Naive thymus-derived CD4-positive, alpha-beta T cell (primary cell): ENCODE measurements at regions of chrX and their contacts with region 1.

Region 1: GRCh38 chrX:154458114-154458953 is at the start of gene PLXNA3:
- DNase-seq: peak; percentile 40 to 74 (median 68)
- ATAC-seq: peak; percentile 90
- H3K4me3 ChIP-seq: peak within 1 kb of the TSS; percentile 45
- H3K4me3 Mint-ChIP-seq: peak within 1 kb of the TSS; percentile 79 to 97 (median 94)
- H3K27ac ChIP-seq: peak within 1 kb of the TSS; percentile 70
- H3K27ac Mint-ChIP-seq: peak within 1 kb of the TSS; percentile 86 to 98 (median 94)
- H3K4me1 ChIP-seq: peaks cover 0 to 3% of the 10 kb centered on the region in 2 donors
- H3K4me1 Mint-ChIP-seq: peaks cover 4 to 16% (median 9%) of the 10 kb centered on the region in 7 donors
- H3K27me3 ChIP-seq: no peaks in the 10 kb centered on the region
- H3K27me3 Mint-ChIP-seq: no peaks in the 10 kb centered on the region
- total RNA-seq, gene PLXNA3: 32.9 to 45.7 (median 43.3) TPM

Region 2: DNA sequence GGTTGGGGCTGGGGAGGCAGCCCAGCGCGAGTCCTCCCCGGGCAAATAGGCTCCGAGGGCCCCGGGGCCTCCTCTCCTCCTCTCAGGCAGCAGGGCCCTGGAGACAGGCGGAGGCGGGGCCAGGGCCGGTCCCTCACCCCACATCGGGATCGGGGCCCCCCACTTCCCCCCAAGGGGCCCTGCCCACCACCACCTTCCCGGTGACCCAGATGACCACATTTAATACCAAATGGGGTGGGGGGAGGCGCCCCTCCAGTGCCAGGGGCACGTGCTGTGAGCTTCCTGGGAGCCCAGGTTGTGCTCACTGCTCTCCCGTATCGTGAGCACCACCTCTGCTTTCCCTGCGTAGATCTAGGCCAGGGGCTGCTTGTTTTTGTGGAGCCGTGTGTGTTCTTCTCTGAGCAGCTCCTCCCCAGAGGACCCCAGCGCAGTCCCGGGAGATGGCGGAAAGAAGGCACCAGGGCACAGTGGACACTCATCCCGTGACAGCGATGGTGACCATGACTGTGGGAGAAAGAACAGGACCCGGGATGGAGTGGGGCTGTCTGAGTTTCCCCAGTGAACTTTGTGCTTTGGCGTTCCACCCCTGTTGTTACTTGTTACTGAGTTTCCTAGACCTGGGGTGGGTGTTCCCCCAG is 1384.0 kb before region 1 on chrX:
- CTCF ChIA-PET with region 1: no interaction called
- POLR2A ChIA-PET with region 1: no interaction called
- intact Hi-C with region 1: no loop called
- DNase-seq: no peak
- ATAC-seq: no peak
- H3K4me3 ChIP-seq: no peak overlapping the region
- H3K4me3 Mint-ChIP-seq: peak overlapping the region in 2 of 10 donors; percentile 44 to 57
- H3K27ac ChIP-seq: no peak overlapping the region
- H3K27ac Mint-ChIP-seq: no peak overlapping the region
- H3K4me1 ChIP-seq: no peaks in the 10 kb centered on the region
- H3K4me1 Mint-ChIP-seq: no peaks in the 10 kb centered on the region
- H3K27me3 ChIP-seq: no peaks in the 10 kb centered on the region
- H3K27me3 Mint-ChIP-seq: peaks cover 0 to 4% (median 0%) of the 10 kb centered on the region in 5 donors

Region 3: DNA sequence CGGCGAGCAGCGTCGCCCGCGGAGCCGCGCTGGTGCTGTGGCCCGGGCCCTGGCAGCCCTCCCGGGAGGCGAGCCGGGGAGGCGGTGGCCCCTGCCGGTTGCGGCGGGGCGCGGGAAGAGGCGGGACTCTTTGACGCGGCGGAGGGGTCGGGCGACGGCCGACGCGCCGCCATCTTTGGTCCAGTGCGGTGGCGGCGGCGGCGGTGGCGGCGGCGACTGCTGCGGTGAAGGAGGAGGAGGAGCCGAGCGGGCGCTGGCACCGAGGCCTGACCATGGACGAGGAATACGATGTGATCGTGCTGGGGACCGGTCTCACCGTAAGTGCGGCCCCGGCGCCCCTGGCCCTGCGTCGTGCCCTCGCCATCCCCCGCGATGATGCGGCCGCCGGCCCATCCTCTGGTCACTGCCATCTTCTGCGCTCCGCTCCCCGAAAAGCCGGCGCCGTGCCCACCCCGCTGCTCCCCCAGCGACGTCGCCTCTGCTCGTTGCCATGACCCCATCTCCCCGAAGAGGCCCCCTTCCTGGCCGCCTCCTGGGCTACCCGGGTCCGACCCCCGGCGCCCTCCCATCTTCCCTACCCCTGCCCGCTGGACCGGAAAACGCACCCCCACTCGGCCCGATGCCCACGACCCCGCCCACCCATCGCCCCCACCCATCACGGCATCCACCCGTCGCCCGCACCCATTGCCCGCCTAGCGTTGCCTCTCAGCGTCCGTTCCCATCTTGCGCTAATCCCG is 21.2 kb before region 1 on chrX and contains the start of gene GDI1:
- CTCF ChIA-PET with region 1: no interaction called
- POLR2A ChIA-PET with region 1: interaction called, 6 read pairs
- intact Hi-C with region 1: loop called in 1 of 2 experiments (anchors 2 kb)
- DNase-seq: peak; percentile 39 to 72 (median 62)
- ATAC-seq: peak; percentile 82
- H3K4me3 ChIP-seq: peak within 1 kb of the TSS; percentile 48
- H3K4me3 Mint-ChIP-seq: peak within 1 kb of the TSS; percentile 75 to 90 (median 86)
- H3K27ac ChIP-seq: peak within 1 kb of the TSS; percentile 85
- H3K27ac Mint-ChIP-seq: peak within 1 kb of the TSS; percentile 82 to 97 (median 91)
- H3K4me1 ChIP-seq: no peaks in the 10 kb centered on the region
- H3K4me1 Mint-ChIP-seq: peaks cover 0 to 36% (median 17%) of the 10 kb centered on the region in 7 donors
- H3K27me3 ChIP-seq: no peaks in the 10 kb centered on the region
- H3K27me3 Mint-ChIP-seq: no peaks in the 10 kb centered on the region
- total RNA-seq, gene GDI1: 106 to 174 (median 140) TPM

Region 4: GRCh38 chrX:154443992-154444754 is 14.2 kb before region 1 on chrX and contains the start of gene FAM50A:
- CTCF ChIA-PET with region 1: no interaction called
- POLR2A ChIA-PET with region 1: interaction called, 6 read pairs
- intact Hi-C with region 1: loop called (anchors 1 to 2 kb)
- DNase-seq: peak; percentile 38 to 81 (median 53)
- ATAC-seq: peak; percentile 91
- H3K4me3 ChIP-seq: peak within 1 kb of the TSS; percentile 55
- H3K4me3 Mint-ChIP-seq: peak within 1 kb of the TSS; percentile 53 to 84 (median 78)
- H3K27ac ChIP-seq: peak within 1 kb of the TSS; percentile 74
- H3K27ac Mint-ChIP-seq: peak within 1 kb of the TSS in 6 of 9 donors; percentile 71 to 88 (median 78)
- H3K4me1 ChIP-seq: peaks cover 6 to 14% of the 10 kb centered on the region in 2 donors
- H3K4me1 Mint-ChIP-seq: peaks cover 0 to 29% (median 10%) of the 10 kb centered on the region in 7 donors
- H3K27me3 ChIP-seq: no peaks in the 10 kb centered on the region
- H3K27me3 Mint-ChIP-seq: no peaks in the 10 kb centered on the region
- total RNA-seq, gene FAM50A: 47.2 to 76.5 (median 49.3) TPM

Region 5: GRCh38 chrX:154717824-154718223 is 259.5 kb after region 1 on chrX:
- CTCF ChIA-PET with region 1: no interaction called
- POLR2A ChIA-PET with region 1: no interaction called
- intact Hi-C with region 1: no loop called
- DNase-seq: peak in 5 of 9 donors; percentile 8 to 36 (median 24)
- ATAC-seq: peak; percentile 48
- H3K4me3 ChIP-seq: peak overlapping the region; percentile 1
- H3K4me3 Mint-ChIP-seq: peak overlapping the region; percentile 20 to 78 (median 69)
- H3K27ac ChIP-seq: no peak overlapping the region
- H3K27ac Mint-ChIP-seq: peak overlapping the region in 8 of 9 donors; percentile 62 to 95 (median 83)
- H3K4me1 ChIP-seq: peaks cover 29 to 60% of the 10 kb centered on the region in 2 donors
- H3K4me1 Mint-ChIP-seq: peaks cover 29 to 54% (median 38%) of the 10 kb centered on the region in 7 donors
- H3K27me3 ChIP-seq: no peaks in the 10 kb centered on the region
- H3K27me3 Mint-ChIP-seq: no peaks in the 10 kb centered on the region